Endothelial cell of umbilical vein (primary cell): ENCODE measurements at regions of chr10 and their contacts with region 1.

Region 1: DNA sequence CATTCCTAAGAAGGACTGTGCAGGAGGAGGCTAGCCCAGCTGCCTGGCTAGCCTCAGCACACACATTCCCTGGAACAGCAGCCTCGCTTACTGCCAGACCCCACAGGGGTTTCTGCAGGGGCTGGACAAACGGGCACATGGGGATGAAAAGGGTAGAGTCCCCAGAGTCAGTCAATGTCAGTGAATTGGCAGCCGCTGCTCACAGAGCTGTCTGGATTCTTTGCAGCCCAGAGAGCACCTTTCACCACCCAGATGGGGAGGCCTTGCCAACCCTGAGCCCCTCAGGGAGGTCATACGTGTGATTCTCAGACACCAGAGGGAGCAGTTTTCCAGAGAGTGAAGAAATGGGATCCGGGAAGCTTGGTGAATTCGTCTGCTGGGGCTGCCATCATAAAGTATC is 143.3 kb downstream of the KCNMA1 start:
- DNase-seq: no peak
- H3K4me3 ChIP-seq: no peak overlapping the region
- H3K27ac ChIP-seq: no peak overlapping the region
- H3K4me1 ChIP-seq: no peaks in the 10 kb centered on the region
- H3K27me3 ChIP-seq: peaks cover 0 to 2% of the 10 kb centered on the region in 2 experiments
- CTCF ChIP-seq: peak in 1 of 2 donors; percentile 9
- POLR2A ChIP-seq: no peak

Region 2: GRCh38 chr10:77251297-77252013 is 242.9 kb before region 1 on chr10:
- CTCF ChIA-PET with region 1: no interaction called
- POLR2A ChIA-PET with region 1: no interaction called
- dilution Hi-C with region 1: no loop called
- intact Hi-C with region 1: loop called (anchors 5 kb)
- DNase-seq: peak; percentile 55
- H3K4me3 ChIP-seq: no peak overlapping the region
- H3K27ac ChIP-seq: no peak overlapping the region
- H3K4me1 ChIP-seq: no peaks in the 10 kb centered on the region
- H3K27me3 ChIP-seq: peaks cover 0 to 2% of the 10 kb centered on the region in 2 experiments
- CTCF ChIP-seq: peak; percentile 67 to 72
- POLR2A ChIP-seq: no peak

Region 3: GRCh38 chr10:77279207-77279606 is 215.1 kb before region 1 on chr10:
- CTCF ChIA-PET with region 1: no interaction called
- POLR2A ChIA-PET with region 1: no interaction called
- dilution Hi-C with region 1: no loop called
- intact Hi-C with region 1: no loop called
- DNase-seq: no peak
- H3K4me3 ChIP-seq: no peak overlapping the region
- H3K27ac ChIP-seq: no peak overlapping the region
- H3K4me1 ChIP-seq: no peaks in the 10 kb centered on the region
- H3K27me3 ChIP-seq: peaks cover 7 to 8% of the 10 kb centered on the region in 2 experiments
- CTCF ChIP-seq: no peak
- POLR2A ChIP-seq: no peak

Region 4: DNA sequence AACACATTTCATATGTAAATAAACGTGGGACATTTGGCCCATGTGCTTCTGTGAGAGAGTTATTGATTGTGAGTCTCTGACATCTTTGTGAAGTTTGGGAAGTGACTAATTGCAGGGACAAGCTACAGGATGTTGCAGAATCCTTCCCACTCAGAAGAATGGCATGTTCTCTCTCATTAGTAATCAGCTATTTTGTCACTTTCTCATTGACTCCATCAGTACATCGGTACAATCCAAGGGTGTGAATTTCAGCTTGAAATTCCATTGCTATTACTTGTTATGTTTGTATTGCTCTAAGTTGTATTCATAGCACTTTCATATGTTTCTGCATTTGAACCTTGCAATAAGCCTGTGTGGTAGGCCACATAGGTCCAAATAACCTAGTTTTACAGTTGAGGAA is 243.3 kb after region 1 on chr10:
- CTCF ChIA-PET with region 1: no interaction called
- POLR2A ChIA-PET with region 1: no interaction called
- dilution Hi-C with region 1: no loop called
- intact Hi-C with region 1: no loop called
- DNase-seq: peak; percentile 94
- H3K4me3 ChIP-seq: no peak overlapping the region
- H3K27ac ChIP-seq: peak overlapping the region; percentile 90
- H3K4me1 ChIP-seq: peaks cover 20% of the 10 kb centered on the region
- H3K27me3 ChIP-seq: no peaks in the 10 kb centered on the region
- CTCF ChIP-seq: no peak
- POLR2A ChIP-seq: peak; percentile 37